CD14-positive monocyte (primary cell): ENCODE measurements at regions of chr15 and their contacts with region 1.

Region 1: GRCh38 chr15:94174399-94174802 is 57.0 kb upstream of the MCTP2 start:
- DNase-seq: peak; percentile 91 to 97 (median 97)
- H3K4me3 ChIP-seq: peak overlapping the region in 1 of 3 experiments; percentile 59
- H3K4me3 Mint-ChIP-seq: peak overlapping the region; percentile 32 to 70
- H3K27ac ChIP-seq: peak overlapping the region; percentile 60 to 73
- H3K27ac Mint-ChIP-seq: peak overlapping the region; percentile 90 to 99 (median 97)
- H3K4me1 ChIP-seq: peaks cover 32 to 47% of the 10 kb centered on the region in 2 donors
- H3K4me1 Mint-ChIP-seq: peaks cover 61% of the 10 kb centered on the region
- H3K27me3 ChIP-seq: peaks cover 0 to 2% of the 10 kb centered on the region in 2 donors
- H3K27me3 Mint-ChIP-seq: peaks cover 5 to 20% (median 14%) of the 10 kb centered on the region in 3 donors
- CTCF ChIP-seq: no peak

Region 2: GRCh38 chr15:92903941-92904831 is 1270.2 kb before region 1 on chr15:
- intact Hi-C with region 1: loop called in 1 of 2 experiments (anchors 10 kb)
- DNase-seq: peak; percentile 99
- H3K4me3 ChIP-seq: peak overlapping the region; percentile 77 to 100 (median 98)
- H3K4me3 Mint-ChIP-seq: peak overlapping the region; percentile 88 to 93
- H3K27ac ChIP-seq: peak overlapping the region; percentile 92 to 98
- H3K27ac Mint-ChIP-seq: peak overlapping the region; percentile 99 to 100 (median 100)
- H3K4me1 ChIP-seq: peaks cover 52 to 72% of the 10 kb centered on the region in 2 donors
- H3K4me1 Mint-ChIP-seq: peaks cover 56% of the 10 kb centered on the region
- H3K27me3 ChIP-seq: no peaks in the 10 kb centered on the region
- H3K27me3 Mint-ChIP-seq: peaks cover 0 to 3% (median 0%) of the 10 kb centered on the region in 3 donors
- CTCF ChIP-seq: no peak

Region 3: GRCh38 chr15:94206463-94207167 is 32.2 kb after region 1 on chr15:
- intact Hi-C with region 1: loop called in 1 of 2 experiments (anchors 1 kb)
- DNase-seq: peak; percentile 69 to 81 (median 71)
- H3K4me3 ChIP-seq: peak overlapping the region; percentile 12 to 62 (median 46)
- H3K4me3 Mint-ChIP-seq: peak overlapping the region; percentile 59 to 80
- H3K27ac ChIP-seq: peak overlapping the region in 1 of 2 donors; percentile 30
- H3K27ac Mint-ChIP-seq: peak overlapping the region in 6 of 7 donors; percentile 41 to 85 (median 76)
- H3K4me1 ChIP-seq: peaks cover 24% of the 10 kb centered on the region in 2 donors
- H3K4me1 Mint-ChIP-seq: peaks cover 36% of the 10 kb centered on the region
- H3K27me3 ChIP-seq: peaks cover 0 to 2% of the 10 kb centered on the region in 2 donors
- H3K27me3 Mint-ChIP-seq: peaks cover 2 to 8% (median 5%) of the 10 kb centered on the region in 3 donors
- CTCF ChIP-seq: no peak

Region 4: DNA sequence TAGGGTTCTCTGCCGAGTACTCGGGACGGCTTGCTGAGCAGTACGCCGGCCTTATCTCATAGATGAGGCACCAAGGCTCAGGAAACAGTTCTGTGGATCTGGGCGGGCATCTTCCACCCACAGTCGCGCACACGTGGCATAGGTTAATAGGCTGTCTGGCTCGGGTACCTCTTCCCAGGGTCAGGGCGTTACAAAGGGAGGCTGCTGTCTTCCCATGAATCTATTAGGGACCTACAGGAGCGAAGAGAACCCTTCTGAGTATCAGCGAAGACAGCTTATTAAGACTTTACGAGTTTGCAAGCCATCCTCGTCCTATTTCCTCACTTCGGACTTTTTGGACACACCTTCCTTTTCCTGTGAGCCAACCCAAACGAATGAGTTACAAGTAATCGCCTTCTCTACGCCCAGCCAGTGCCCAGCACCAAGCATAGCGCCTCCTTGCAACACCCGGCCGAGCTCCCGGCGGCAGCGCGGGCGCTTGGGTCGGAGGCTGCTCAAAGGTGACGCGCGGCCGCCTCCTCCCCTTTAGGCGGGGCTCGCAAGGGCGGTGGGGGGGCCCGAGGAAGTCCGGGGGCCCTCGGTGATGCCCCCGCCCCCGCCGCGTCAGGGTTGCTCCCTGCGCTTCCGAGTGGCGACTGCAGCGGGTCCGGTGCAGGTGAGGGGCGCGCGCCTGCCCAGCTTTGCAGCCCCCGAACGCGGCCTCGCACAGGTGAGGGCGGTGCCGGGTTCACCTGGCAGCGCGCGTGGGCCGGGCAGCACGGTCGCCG is 56.7 kb after region 1 on chr15 and contains the start of gene MCTP2:
- intact Hi-C with region 1: loop called (anchors 2 kb)
- DNase-seq: peak; percentile 89 to 97 (median 91)
- H3K4me3 ChIP-seq: peak within 1 kb of the TSS; percentile 80 to 97 (median 85)
- H3K4me3 Mint-ChIP-seq: peak within 1 kb of the TSS; percentile 87 to 94
- H3K27ac ChIP-seq: peak within 1 kb of the TSS; percentile 83 to 90
- H3K27ac Mint-ChIP-seq: peak within 1 kb of the TSS; percentile 90 to 99 (median 97)
- H3K4me1 ChIP-seq: peaks cover 59 to 67% of the 10 kb centered on the region in 2 donors
- H3K4me1 Mint-ChIP-seq: peaks cover 65% of the 10 kb centered on the region
- H3K27me3 ChIP-seq: peaks cover 2 to 9% of the 10 kb centered on the region in 2 donors
- H3K27me3 Mint-ChIP-seq: peaks cover 3 to 12% (median 8%) of the 10 kb centered on the region in 3 donors
- CTCF ChIP-seq: no peak
- polyA plus RNA-seq, gene MCTP2: 2.4 to 7.4 (median 7.3) TPM